ENCODE measurements at regions of chr3 and their contacts with region 1.

Region 1: DNA sequence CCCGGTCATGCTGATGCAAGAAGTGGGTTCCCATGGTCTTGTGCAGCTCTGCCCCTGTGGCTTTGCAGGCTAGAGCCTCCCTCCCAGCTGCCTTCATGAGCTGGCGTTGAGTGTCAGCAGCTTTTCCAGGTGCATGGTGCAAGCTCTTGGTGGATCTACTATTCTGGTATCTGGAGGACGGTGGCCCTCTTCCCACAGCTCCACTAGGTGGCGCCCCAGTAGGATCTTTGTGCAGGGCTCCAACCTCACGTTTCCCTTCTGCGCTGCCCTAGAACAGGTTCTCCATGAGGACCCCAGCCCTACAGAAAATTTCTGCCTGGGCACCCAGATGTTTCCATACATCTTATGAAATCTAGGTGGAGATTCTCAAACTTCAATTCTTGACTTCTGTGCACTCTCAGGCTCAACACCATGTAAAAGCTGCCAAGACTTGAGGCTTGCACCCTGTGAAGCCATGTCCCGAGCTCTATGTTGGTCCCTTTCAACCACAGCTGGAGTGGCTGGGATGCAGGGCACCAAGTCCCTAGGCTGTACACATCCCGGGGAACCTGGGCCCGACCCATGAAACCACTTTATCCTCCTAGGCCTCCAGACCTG is 238.4 kb upstream of the MDFIC2 start:
- DNase-seq: peak; percentile 65 to 72
- ATAC-seq: peak; percentile 76 to 92 (median 82)
- H3K4me3 ChIP-seq: no peak overlapping the region
- H3K27ac ChIP-seq: no peak overlapping the region
- H3K4me1 ChIP-seq: no peaks in the 10 kb centered on the region
- H3K27me3 ChIP-seq: no peaks in the 10 kb centered on the region
- CTCF ChIP-seq: peak; percentile 67 to 86 (median 81)

Region 2: GRCh38 chr3:71087143-71088018 is 536.6 kb after region 1 on chr3:
- intact Hi-C with region 1: loop called in 1 of 10 experiments (anchors 10 kb)
- DNase-seq: no peak
- ATAC-seq: no peak
- H3K4me3 ChIP-seq: no peak overlapping the region
- H3K27ac ChIP-seq: peak overlapping the region in 1 of 10 donors; percentile 29
- H3K4me1 ChIP-seq: peaks cover 0 to 31% (median 7%) of the 10 kb centered on the region in 9 donors
- H3K27me3 ChIP-seq: no peaks in the 10 kb centered on the region
- CTCF ChIP-seq: no peak

Region 3: GRCh38 chr3:71201939-71202338 is 651.1 kb after region 1 on chr3:
- intact Hi-C with region 1: no loop called
- DNase-seq: peak; percentile 46 to 77
- ATAC-seq: peak; percentile 65 to 84 (median 76)
- H3K4me3 ChIP-seq: no peak overlapping the region
- H3K27ac ChIP-seq: peak overlapping the region in 3 of 10 donors; percentile 4 to 36 (median 13)
- H3K4me1 ChIP-seq: peaks cover 0 to 39% (median 19%) of the 10 kb centered on the region in 9 donors
- H3K27me3 ChIP-seq: no peaks in the 10 kb centered on the region
- CTCF ChIP-seq: no peak

Region 4: GRCh38 chr3:71591101-71591500 is 1040.3 kb after region 1 on chr3:
- intact Hi-C with region 1: loop called in 9 of 10 experiments (anchors 2 to 10 kb)
- DNase-seq: no peak
- ATAC-seq: no peak
- H3K4me3 ChIP-seq: no peak overlapping the region
- H3K27ac ChIP-seq: no peak overlapping the region
- H3K4me1 ChIP-seq: peaks cover 0 to 6% (median 4%) of the 10 kb centered on the region in 9 donors
- H3K27me3 ChIP-seq: no peaks in the 10 kb centered on the region
- CTCF ChIP-seq: no peak